ENCODE measurements at regions of chr7 and their contacts with region 1.

Region 1: DNA sequence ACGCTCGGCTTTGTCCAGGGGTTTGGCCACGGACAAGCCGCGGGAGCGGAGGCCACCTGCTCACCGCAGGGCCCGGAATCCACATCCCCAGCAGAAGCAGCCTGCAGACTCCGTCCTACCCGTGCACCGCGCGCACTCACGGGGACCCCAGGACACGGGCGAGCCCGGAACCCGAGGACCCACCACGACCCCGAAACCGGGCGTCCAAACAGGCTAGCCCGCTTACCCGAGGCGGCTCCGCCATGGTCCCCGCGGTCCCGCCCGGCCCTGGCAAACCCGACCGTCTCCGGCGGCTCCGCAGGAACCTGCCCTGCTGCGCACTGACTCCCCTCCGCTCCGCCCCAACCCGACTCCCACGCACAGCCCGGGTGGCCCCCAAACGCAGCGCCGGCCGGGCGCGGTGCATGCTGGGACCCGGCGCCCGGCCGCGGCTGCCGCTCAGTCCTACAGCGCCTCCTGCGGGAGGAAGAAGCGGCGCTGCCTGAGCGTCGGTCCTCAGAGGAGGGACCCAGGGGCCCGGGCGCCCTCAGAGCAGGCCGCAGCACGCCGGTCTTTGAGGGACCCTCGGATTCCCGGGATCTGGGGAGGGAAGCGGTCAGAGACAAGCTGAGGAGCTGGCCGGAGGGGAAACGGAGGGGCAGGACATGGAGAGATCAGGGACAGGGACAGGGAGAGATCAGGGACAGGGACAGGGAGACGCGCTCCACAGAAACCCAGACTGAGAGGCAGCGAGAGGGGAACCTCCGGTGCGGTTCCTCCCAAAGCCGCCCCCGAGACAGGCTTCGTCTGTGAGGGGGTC is at the start of gene ZNF786:
- DNase-seq: peak; percentile 90
- ATAC-seq: peak; percentile 84
- H3K4me3 Mint-ChIP-seq: peak within 1 kb of the TSS; percentile 100
- H3K27ac Mint-ChIP-seq: peak within 1 kb of the TSS; percentile 100
- H3K4me1 Mint-ChIP-seq: peaks cover 32% of the 10 kb centered on the region
- H3K27me3 Mint-ChIP-seq: no peaks in the 10 kb centered on the region
- CTCF ChIP-seq: no peak
- total RNA-seq, gene ZNF786: 9.2 and 11.0 TPM in 2 replicates

Region 2: DNA sequence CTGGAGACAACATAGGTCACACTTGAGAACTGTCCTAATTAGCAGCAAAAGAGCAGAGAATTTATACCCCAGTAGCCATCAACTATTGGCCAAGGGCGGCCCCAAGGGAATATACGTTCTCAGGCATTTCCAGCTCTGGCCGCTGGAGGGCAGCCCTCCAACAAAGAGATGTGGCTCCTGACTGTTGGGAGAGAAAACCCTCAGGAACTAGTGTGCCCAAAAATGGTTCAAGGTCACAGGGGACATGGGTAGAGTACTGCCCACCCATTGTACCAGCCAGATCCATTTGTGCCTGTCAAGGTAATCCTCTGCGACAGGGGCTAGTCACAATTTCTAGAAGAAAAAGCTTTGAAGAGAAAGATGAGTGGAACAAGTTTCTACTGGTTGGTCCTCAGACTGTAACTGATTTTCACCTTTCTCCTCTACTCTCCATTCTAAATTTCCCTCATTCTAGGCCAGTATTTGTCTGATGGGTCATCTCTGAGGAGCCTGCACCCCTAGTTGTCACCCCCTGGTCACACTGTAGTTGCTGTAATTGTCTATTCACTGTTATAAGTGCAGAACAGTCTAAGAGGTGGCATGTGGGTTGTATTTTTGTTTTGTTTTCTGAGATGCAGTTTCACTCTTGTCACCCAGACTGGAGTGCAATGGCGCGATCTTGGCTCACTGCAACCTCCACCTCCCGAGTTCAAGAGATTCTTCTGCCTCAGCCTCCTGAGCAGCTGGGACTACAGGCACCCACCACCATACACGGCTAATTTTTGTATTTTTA is 514.8 kb before region 1 on chr7:
- CTCF ChIA-PET with region 1: no interaction called
- POLR2A ChIA-PET with region 1: no interaction called
- intact Hi-C with region 1: loop called (anchors 10 kb)
- DNase-seq: peak; percentile 56
- ATAC-seq: peak; percentile 88
- H3K4me3 Mint-ChIP-seq: no peak overlapping the region
- H3K27ac Mint-ChIP-seq: no peak overlapping the region
- H3K4me1 Mint-ChIP-seq: peaks cover 2% of the 10 kb centered on the region
- H3K27me3 Mint-ChIP-seq: peaks cover 2% of the 10 kb centered on the region
- CTCF ChIP-seq: no peak

Region 3: GRCh38 chr7:148940702-148941597 is 149.6 kb before region 1 on chr7:
- CTCF ChIA-PET with region 1: no interaction called
- POLR2A ChIA-PET with region 1: no interaction called
- intact Hi-C with region 1: loop called (anchors 2 kb)
- DNase-seq: peak; percentile 68
- ATAC-seq: peak; percentile 77
- H3K4me3 Mint-ChIP-seq: peak overlapping the region; percentile 97
- H3K27ac Mint-ChIP-seq: peak overlapping the region; percentile 99
- H3K4me1 Mint-ChIP-seq: peaks cover 17% of the 10 kb centered on the region
- H3K27me3 Mint-ChIP-seq: no peaks in the 10 kb centered on the region
- CTCF ChIP-seq: no peak

Region 4: DNA sequence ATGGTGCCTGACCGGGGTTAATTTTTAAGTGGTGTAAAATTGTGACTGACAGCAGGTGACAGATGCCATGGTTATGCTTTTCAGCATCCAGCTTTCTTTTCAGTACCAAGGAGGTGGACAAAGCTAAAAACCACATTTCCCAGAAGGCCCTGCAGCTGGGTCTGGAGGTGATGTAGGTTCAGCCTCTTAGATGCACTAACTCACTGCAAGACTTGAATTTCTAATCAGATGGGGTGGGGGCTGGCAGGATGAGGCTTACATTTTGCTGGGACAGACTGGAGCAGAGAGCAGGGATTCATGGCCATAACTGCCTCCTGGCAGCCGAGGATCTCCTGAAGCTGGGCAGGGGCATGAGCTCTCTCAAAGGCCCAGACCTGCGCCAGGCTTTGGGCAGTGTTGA is 114.7 kb before region 1 on chr7:
- CTCF ChIA-PET with region 1: no interaction called
- POLR2A ChIA-PET with region 1: no interaction called
- intact Hi-C with region 1: no loop called
- DNase-seq: no peak
- ATAC-seq: no peak
- H3K4me3 Mint-ChIP-seq: no peak overlapping the region
- H3K27ac Mint-ChIP-seq: no peak overlapping the region
- H3K4me1 Mint-ChIP-seq: peaks cover 4% of the 10 kb centered on the region
- H3K27me3 Mint-ChIP-seq: peaks cover 8% of the 10 kb centered on the region
- CTCF ChIP-seq: no peak

Region 5: GRCh38 chr7:149005241-149006050 is 85.2 kb before region 1 on chr7:
- CTCF ChIA-PET with region 1: interaction called, 10 read pairs
- POLR2A ChIA-PET with region 1: interaction called, 7 read pairs
- intact Hi-C with region 1: loop called (anchors 1 kb)
- DNase-seq: peak; percentile 74
- ATAC-seq: peak; percentile 91
- H3K4me3 Mint-ChIP-seq: no peak overlapping the region
- H3K27ac Mint-ChIP-seq: no peak overlapping the region
- H3K4me1 Mint-ChIP-seq: peaks cover 3% of the 10 kb centered on the region
- H3K27me3 Mint-ChIP-seq: no peaks in the 10 kb centered on the region
- CTCF ChIP-seq: peak; percentile 56

Region 6: GRCh38 chr7:149147072-149147751 is 56.6 kb after region 1 on chr7 and contains the start of gene ZNF398:
- CTCF ChIA-PET with region 1: no interaction called
- POLR2A ChIA-PET with region 1: interaction called, 4 read pairs
- intact Hi-C with region 1: loop called (anchors 1 kb)
- DNase-seq: peak; percentile 87
- ATAC-seq: peak; percentile 84
- H3K4me3 Mint-ChIP-seq: peak within 1 kb of the TSS; percentile 91
- H3K27ac Mint-ChIP-seq: peak within 1 kb of the TSS; percentile 94
- H3K4me1 Mint-ChIP-seq: peaks cover 32% of the 10 kb centered on the region
- H3K27me3 Mint-ChIP-seq: no peaks in the 10 kb centered on the region
- CTCF ChIP-seq: no peak
- total RNA-seq, gene ZNF398: 15.1 and 17.3 TPM in 2 replicates

Region 7: DNA sequence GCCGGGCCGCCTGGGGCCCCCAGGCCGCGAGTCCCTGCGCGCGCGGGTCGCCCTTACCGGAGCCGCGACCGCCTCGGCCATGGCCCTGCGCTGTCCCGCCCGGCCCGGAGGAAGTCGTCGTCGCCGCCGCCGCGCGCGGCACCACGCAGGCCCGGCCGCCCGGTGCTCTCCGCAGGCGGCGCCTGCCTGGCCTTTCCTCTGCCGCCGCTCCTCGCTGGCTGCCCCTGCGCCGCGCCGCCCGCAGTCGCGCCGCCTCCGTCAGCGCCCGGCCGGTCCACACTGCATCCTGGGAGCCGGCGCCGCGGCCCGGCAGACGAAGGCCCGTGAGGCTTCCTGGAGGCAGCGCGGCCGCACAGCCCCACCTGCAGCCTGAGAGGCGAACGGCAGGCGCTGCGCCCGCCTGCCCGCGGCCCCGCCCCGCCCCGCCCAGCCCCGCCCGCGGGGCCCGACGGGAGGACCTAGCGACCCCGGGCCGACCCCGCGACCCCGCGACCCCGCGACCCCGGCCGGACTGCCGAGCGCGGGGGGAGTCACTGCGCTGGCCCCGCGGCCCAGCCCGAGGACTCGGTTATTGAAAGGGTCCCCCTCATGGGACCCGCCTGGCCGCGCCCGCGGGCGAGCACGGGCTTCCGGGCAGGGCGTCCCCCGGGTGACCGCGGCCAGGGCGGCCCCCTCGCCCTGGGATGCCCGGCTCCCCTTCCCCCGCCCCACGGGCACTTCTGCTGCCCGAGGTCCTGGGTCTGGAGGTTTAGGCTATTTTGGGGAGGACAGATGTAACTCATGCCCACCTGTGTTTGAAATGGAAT is 407.1 kb after region 1 on chr7 and contains the start of gene ZNF746:
- CTCF ChIA-PET with region 1: no interaction called
- POLR2A ChIA-PET with region 1: no interaction called
- intact Hi-C with region 1: loop called (anchors 2 kb)
- DNase-seq: peak; percentile 79
- ATAC-seq: peak; percentile 96
- H3K4me3 Mint-ChIP-seq: peak within 1 kb of the TSS; percentile 92
- H3K27ac Mint-ChIP-seq: peak within 1 kb of the TSS; percentile 82
- H3K4me1 Mint-ChIP-seq: peaks cover 24% of the 10 kb centered on the region
- H3K27me3 Mint-ChIP-seq: peaks cover 2% of the 10 kb centered on the region
- CTCF ChIP-seq: no peak
- total RNA-seq, gene ZNF746: 21.0 and 28.4 TPM in 2 replicates